ENCODE measurements at regions of chr10 and their contacts with region 1.

Region 1: GRCh38 chr10:97210543-97210961 is 24.8 kb upstream of the SLIT1 start:
- DNase-seq: no peak
- H3K4me3 ChIP-seq: no peak overlapping the region
- CTCF ChIP-seq: peak; percentile 91

Region 2: GRCh38 chr10:96789571-96790108 is 420.9 kb before region 1 on chr10:
- CTCF ChIA-PET with region 1: interaction called, 10 read pairs
- POLR2A ChIA-PET with region 1: no interaction called
- DNase-seq: no peak
- H3K4me3 ChIP-seq: no peak overlapping the region
- CTCF ChIP-seq: peak; percentile 77

Region 3: DNA sequence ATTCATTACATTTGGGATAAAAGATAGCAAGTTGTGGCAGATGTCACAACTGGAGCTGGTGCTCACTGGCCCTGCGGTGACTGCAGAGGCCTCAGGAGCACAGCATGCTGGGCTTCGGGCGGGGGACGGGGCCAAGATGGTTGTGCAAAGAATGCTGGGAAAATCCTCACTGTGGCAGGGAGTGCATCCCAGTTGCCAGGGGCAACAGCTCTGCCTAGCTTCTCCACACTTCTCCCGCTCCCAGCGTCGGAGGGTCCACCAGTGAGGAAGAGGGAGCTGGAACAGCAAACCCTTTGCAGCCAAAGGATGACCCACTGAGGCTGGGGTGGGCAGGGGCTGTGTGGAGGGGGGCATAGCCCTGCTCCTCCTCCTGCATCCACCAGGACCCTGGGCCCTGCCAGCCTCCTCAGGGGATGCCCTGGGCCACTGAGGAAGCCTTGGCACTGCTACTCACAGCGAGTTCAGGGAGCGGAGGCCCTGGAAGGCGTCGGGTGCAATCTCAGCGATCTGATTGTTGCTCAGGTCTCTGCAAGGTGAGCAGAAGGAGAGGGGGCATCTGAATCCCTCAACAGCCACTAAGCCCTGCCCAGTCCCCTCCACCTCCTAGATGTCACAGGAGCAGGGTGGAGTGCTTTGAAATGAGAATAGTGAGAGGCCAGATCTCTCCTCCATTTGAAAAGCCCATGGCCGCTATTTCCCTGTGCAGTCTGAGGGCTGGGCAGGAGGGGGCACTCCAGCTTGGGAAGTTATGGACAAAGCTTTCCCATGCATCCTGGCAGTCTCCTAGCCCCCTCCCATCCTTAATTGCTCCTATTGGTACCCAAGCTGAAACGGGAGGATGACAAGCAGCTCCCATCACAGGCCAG is 151.3 kb before region 1 on chr10:
- CTCF ChIA-PET with region 1: interaction called, 1,063 read pairs
- POLR2A ChIA-PET with region 1: no interaction called
- DNase-seq: no peak
- H3K4me3 ChIP-seq: no peak overlapping the region
- CTCF ChIP-seq: no peak

Region 4: GRCh38 chr10:97179731-97180362 is 30.7 kb before region 1 on chr10:
- CTCF ChIA-PET with region 1: interaction called, 16 read pairs
- POLR2A ChIA-PET with region 1: no interaction called
- DNase-seq: no peak
- H3K4me3 ChIP-seq: no peak overlapping the region
- CTCF ChIP-seq: peak; percentile 23

Region 5: DNA sequence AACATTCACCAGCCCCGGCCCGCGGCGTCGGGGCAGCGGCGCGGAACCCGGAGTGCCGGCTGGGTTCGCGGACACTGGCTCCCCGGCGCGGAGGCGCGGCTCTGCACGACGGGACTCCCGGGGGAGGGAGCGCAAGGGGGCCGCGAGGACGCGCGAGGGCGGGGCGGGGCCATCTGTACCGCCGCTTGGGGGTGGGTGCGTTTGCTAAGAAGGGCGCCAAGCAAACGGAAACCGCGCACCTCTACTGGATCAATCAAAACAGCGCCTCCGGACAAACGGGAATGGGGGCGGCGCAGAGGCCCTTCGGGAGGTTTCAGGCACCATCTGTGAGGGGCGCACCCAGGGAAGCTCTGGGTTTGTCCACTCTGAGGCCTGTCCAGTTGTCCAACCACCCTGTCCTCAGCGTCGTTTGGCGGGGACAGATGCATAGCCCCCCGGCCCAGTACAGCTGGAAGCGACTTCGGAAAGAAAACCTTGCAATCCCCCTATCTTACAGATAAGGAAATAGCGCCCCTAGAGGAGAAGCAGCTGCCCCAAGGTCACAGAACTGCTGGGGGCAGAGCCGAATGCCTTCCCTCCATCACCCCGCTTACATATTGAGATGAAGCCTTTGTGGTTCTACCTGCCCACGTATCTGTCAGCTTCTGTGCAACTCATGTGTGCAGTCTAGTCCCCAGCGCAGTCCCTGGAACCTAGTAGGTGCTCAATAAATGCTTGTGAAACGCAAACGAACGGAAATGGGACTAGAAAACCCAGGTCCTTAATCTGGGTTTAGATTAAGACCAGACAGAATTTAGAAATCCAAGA is 14.1 kb before region 1 on chr10:
- CTCF ChIA-PET with region 1: interaction called, 860 read pairs
- POLR2A ChIA-PET with region 1: no interaction called
- DNase-seq: no peak
- H3K4me3 ChIP-seq: peak overlapping the region; percentile 56
- CTCF ChIP-seq: peak; percentile 69

Region 6: GRCh38 chr10:97334370-97335175 is 124.0 kb after region 1 on chr10 and contains the start of gene FRAT2:
- CTCF ChIA-PET with region 1: interaction called, 10 read pairs
- POLR2A ChIA-PET with region 1: no interaction called
- DNase-seq: no peak
- H3K4me3 ChIP-seq: peak within 1 kb of the TSS; percentile 75
- CTCF ChIP-seq: no peak